A673 (cell line): ENCODE measurements at regions of chr6 and their contacts with region 1.

Region 1: GRCh38 chr6:87589693-87590549 is at the starts of genes ORC3 and RARS2:
- DNase-seq: peak; percentile 95
- H3K4me3 ChIP-seq: peak within 1 kb of the TSS; percentile 67
- H3K27ac ChIP-seq: peak within 1 kb of the TSS; percentile 80
- H3K4me1 ChIP-seq: peaks cover 5% of the 10 kb centered on the region
- H3K27me3 ChIP-seq: no peaks in the 10 kb centered on the region
- CTCF ChIP-seq: no peak
- total RNA-seq, gene ORC3: 46.5 and 48.8 TPM in 2 replicates
- total RNA-seq, gene RARS2: 44.3 and 47.2 TPM in 2 replicates

Region 2: GRCh38 chr6:86888301-86888700 is 701.6 kb before region 1 on chr6:
- CTCF ChIA-PET with region 1: no interaction called
- POLR2A ChIA-PET with region 1: no interaction called
- intact Hi-C with region 1: no loop called
- DNase-seq: peak; percentile 10
- H3K4me3 ChIP-seq: no peak overlapping the region
- H3K27ac ChIP-seq: no peak overlapping the region
- H3K4me1 ChIP-seq: no peaks in the 10 kb centered on the region
- H3K27me3 ChIP-seq: no peaks in the 10 kb centered on the region
- CTCF ChIP-seq: no peak

Region 3: GRCh38 chr6:87154993-87155841 is 434.7 kb before region 1 on chr6 and contains the start of gene ZNF292:
- CTCF ChIA-PET with region 1: no interaction called
- POLR2A ChIA-PET with region 1: no interaction called
- intact Hi-C with region 1: loop called (anchors 10 kb)
- DNase-seq: peak; percentile 99
- H3K4me3 ChIP-seq: peak within 1 kb of the TSS; percentile 92
- H3K27ac ChIP-seq: peak within 1 kb of the TSS; percentile 86
- H3K4me1 ChIP-seq: peaks cover 31% of the 10 kb centered on the region
- H3K27me3 ChIP-seq: no peaks in the 10 kb centered on the region
- CTCF ChIP-seq: no peak
- total RNA-seq, gene ZNF292: 42.6 and 45.0 TPM in 2 replicates

Region 4: GRCh38 chr6:87297115-87297514 is 292.8 kb before region 1 on chr6:
- CTCF ChIA-PET with region 1: no interaction called
- POLR2A ChIA-PET with region 1: no interaction called
- intact Hi-C with region 1: no loop called
- DNase-seq: no peak
- H3K4me3 ChIP-seq: no peak overlapping the region
- H3K27ac ChIP-seq: no peak overlapping the region
- H3K4me1 ChIP-seq: no peaks in the 10 kb centered on the region
- H3K27me3 ChIP-seq: peaks cover 67% of the 10 kb centered on the region
- CTCF ChIP-seq: no peak

Region 5: GRCh38 chr6:87382861-87383260 is 207.1 kb before region 1 on chr6:
- CTCF ChIA-PET with region 1: no interaction called
- POLR2A ChIA-PET with region 1: no interaction called
- intact Hi-C with region 1: no loop called
- DNase-seq: no peak
- H3K4me3 ChIP-seq: no peak overlapping the region
- H3K27ac ChIP-seq: no peak overlapping the region
- H3K4me1 ChIP-seq: no peaks in the 10 kb centered on the region
- H3K27me3 ChIP-seq: no peaks in the 10 kb centered on the region
- CTCF ChIP-seq: no peak

Region 6: DNA sequence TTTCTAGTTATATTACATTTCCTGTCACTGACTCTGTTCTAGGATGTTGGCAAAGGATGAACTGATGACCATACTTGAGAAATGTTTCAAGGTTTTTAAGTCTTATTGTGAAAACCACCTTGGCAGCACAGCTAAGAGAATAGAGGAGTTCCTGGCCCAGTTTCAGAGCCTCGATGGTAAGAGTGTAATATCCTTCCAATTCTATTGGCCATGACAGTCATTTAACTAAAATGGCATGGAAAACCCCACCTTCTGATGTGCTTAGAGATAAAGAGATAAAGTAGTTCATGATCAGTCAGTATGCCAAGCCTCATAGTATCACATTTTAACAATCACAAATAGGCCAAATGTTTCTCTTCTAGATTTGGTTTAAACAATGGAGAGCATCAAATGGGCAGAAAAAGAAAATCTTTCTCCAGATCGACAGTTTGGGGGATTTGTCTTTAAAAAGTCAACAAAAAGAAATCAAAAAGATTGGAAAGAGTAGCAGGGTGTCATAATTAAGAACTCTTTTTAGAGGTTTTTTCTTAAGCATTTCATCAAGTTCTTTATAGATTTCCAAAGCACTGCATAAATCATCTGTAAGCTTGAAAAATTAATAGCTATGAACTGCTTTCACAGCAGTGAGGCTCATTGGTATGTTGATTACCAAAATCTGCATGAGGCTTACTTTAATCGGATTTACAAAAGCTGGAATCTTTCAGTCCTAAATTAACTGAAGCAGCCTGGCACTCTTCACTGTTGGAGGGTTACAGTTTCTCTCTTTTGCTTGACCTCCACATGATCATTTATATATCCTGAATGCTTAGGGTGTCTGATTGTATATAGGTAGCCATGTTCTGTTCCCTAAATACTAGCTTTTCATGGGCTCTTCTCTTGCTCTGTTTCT is 63.4 kb after region 1 on chr6:
- CTCF ChIA-PET with region 1: no interaction called
- POLR2A ChIA-PET with region 1: no interaction called
- intact Hi-C with region 1: loop called (anchors 2 kb)
- DNase-seq: peak; percentile 63
- H3K4me3 ChIP-seq: no peak overlapping the region
- H3K27ac ChIP-seq: peak overlapping the region; percentile 51
- H3K4me1 ChIP-seq: peaks cover 26% of the 10 kb centered on the region
- H3K27me3 ChIP-seq: no peaks in the 10 kb centered on the region
- CTCF ChIP-seq: no peak

Region 7: GRCh38 chr6:87701676-87702588 is 112.0 kb after region 1 on chr6 and contains the start of gene AKIRIN2:
- CTCF ChIA-PET with region 1: no interaction called
- POLR2A ChIA-PET with region 1: no interaction called
- intact Hi-C with region 1: loop called (anchors 5 kb)
- DNase-seq: peak; percentile 99
- H3K4me3 ChIP-seq: peak within 1 kb of the TSS; percentile 94
- H3K27ac ChIP-seq: peak within 1 kb of the TSS; percentile 96
- H3K4me1 ChIP-seq: peaks cover 20% of the 10 kb centered on the region
- H3K27me3 ChIP-seq: no peaks in the 10 kb centered on the region
- CTCF ChIP-seq: no peak
- total RNA-seq, gene AKIRIN2: 66.7 and 68.9 TPM in 2 replicates

Region 8: DNA sequence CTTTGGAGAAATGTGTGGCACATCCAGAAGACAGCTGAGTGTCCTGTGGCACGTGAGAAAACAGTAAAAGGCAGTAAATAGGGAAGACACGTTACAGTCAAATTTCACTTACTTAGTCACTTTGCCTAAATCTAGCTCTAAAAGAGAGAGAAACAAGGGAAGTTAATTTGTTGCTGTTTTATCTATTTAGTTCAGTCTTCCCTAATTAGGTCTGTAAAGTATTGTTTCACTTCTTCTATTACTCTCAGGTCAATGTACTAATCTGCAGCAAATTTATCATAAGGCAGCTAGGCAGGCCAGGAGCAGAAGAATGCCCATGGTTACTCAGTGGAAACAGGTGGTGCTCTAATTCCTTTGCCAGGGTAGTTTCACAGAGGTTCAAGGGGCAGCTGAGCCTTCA is 700.5 kb after region 1 on chr6:
- CTCF ChIA-PET with region 1: no interaction called
- POLR2A ChIA-PET with region 1: no interaction called
- intact Hi-C with region 1: no loop called
- DNase-seq: no peak
- H3K4me3 ChIP-seq: no peak overlapping the region
- H3K27ac ChIP-seq: no peak overlapping the region
- H3K4me1 ChIP-seq: no peaks in the 10 kb centered on the region
- H3K27me3 ChIP-seq: no peaks in the 10 kb centered on the region
- CTCF ChIP-seq: no peak